Sigmoid colon (tissue), 7 donors: ENCODE measurements at regions of chr17 and their contacts with region 1.

Region 1: GRCh38 chr17:77424585-77425344 is 284.0 kb downstream of the SEC14L1 start:
- DNase-seq: peak; percentile 98
- H3K4me3 ChIP-seq: peak overlapping the region in 3 of 4 donors; percentile 21 to 41 (median 29)
- H3K27ac ChIP-seq: peak overlapping the region; percentile 96 to 100 (median 98)
- H3K4me1 ChIP-seq: peaks cover 0 to 99% (median 97%) of the 10 kb centered on the region in 4 donors
- H3K27me3 ChIP-seq: no peaks in the 10 kb centered on the region
- CTCF ChIP-seq: no peak
- EP300 ChIP-seq: peak in 2 of 4 donors; percentile 28 to 72
- POLR2A ChIP-seq: no peak

Region 2: DNA sequence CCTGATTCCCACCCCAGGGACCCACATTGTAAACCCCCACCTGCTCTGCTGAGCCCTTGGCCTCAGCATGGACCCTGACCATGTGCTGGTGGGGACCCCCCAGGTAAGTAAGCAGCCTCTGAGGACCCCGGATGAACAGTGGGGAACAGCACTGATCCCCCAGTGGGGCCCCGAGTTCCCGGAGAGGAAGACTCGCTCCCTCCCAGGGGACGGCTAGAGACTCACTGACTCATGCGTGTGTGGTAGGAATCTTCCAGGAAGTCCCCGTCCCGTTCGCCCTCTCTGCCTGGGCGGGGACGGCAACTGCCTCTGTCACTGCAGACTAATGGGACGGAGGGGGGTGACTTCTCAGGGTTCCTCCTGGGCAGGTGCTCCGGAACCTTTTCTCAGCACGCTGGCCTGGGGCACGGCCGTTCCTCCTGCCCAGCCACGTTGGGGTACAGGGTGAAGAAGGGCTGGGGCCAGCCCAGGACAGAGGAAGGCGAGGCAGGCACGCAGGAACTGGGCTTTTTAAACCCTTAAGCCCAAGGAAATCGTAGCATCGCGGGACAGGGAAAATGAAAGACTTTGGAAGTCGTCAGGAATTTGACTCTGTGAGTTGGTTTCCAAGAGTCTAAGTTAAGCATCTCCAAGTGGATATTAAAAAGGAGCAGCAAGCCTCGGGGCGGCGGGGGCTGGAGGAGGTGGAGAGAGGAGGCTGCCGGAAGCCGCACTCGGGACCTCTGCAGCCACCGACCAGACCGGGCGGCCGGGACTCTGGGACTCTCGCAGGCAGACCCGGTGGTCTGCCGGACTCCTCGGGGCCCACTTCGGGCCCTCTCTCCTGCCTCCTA is 105.3 kb before region 1 on chr17:
- intact Hi-C with region 1: loop called (anchors 1 kb)
- DNase-seq: peak; percentile 96
- H3K4me3 ChIP-seq: peak overlapping the region; percentile 30 to 51 (median 47)
- H3K27ac ChIP-seq: peak overlapping the region; percentile 91 to 92 (median 92)
- H3K4me1 ChIP-seq: peaks cover 0 to 85% (median 75%) of the 10 kb centered on the region in 4 donors
- H3K27me3 ChIP-seq: no peaks in the 10 kb centered on the region
- CTCF ChIP-seq: no peak
- EP300 ChIP-seq: peak in 2 of 4 donors; percentile 27 to 31
- POLR2A ChIP-seq: peak; percentile 65 to 77

Region 3: DNA sequence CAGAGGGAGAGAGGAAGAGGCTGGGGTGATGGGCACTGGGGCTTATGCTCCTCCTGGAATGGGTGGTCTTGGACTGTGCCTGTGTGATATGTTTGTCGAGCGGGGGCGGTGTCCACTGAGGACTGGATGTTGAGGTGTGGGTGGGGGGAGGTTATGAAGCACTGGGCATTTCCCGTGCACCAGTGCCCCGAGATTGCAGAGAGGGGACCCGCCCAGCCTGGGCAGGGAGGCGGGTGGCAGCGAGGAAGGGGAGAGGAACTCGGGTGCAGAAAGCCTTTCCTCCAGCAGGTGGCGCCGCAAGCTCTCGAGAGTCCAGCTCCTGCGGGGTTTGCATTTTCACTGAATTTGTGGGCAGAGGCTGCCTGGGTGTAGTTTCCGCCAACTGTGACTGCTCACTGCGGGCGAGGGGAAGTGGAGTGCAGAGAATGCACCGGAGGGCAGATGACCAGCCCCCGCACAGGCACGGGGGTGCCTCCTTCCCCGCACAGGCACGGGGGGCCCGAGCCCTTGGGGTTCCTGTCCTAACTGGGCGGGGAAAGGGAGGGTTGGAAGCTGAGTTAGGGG is 93.4 kb before region 1 on chr17:
- intact Hi-C with region 1: loop called (anchors 2 kb)
- DNase-seq: peak; percentile 96
- H3K4me3 ChIP-seq: peak overlapping the region in 3 of 4 donors; percentile 34 to 38 (median 35)
- H3K27ac ChIP-seq: peak overlapping the region; percentile 73 to 92 (median 80)
- H3K4me1 ChIP-seq: peaks cover 0 to 43% (median 28%) of the 10 kb centered on the region in 4 donors
- H3K27me3 ChIP-seq: no peaks in the 10 kb centered on the region
- CTCF ChIP-seq: peak; percentile 91 to 97 (median 94)
- EP300 ChIP-seq: no peak
- POLR2A ChIP-seq: no peak

Region 4: GRCh38 chr17:77372444-77373298 is 52.1 kb before region 1 on chr17:
- intact Hi-C with region 1: loop called (anchors 2 kb)
- DNase-seq: peak; percentile 95
- H3K4me3 ChIP-seq: peak overlapping the region; percentile 83 to 99 (median 89)
- H3K27ac ChIP-seq: peak overlapping the region; percentile 95 to 99 (median 99)
- H3K4me1 ChIP-seq: peaks cover 0 to 68% (median 58%) of the 10 kb centered on the region in 4 donors
- H3K27me3 ChIP-seq: no peaks in the 10 kb centered on the region
- CTCF ChIP-seq: no peak
- EP300 ChIP-seq: no peak
- POLR2A ChIP-seq: peak in 1 of 2 donors; percentile 17

Region 5: GRCh38 chr17:77396610-77397009 is 28.2 kb before region 1 on chr17:
- intact Hi-C with region 1: no loop called
- DNase-seq: no peak
- H3K4me3 ChIP-seq: no peak overlapping the region
- H3K27ac ChIP-seq: peak overlapping the region; percentile 96 to 100 (median 99)
- H3K4me1 ChIP-seq: peaks cover 0 to 96% (median 84%) of the 10 kb centered on the region in 4 donors
- H3K27me3 ChIP-seq: no peaks in the 10 kb centered on the region
- CTCF ChIP-seq: no peak
- EP300 ChIP-seq: no peak
- POLR2A ChIP-seq: no peak

Region 6: GRCh38 chr17:77409282-77410161 is 15.2 kb before region 1 on chr17:
- intact Hi-C with region 1: loop called (anchors 1 kb)
- DNase-seq: peak; percentile 97
- H3K4me3 ChIP-seq: peak overlapping the region; percentile 9 to 33 (median 27)
- H3K27ac ChIP-seq: peak overlapping the region; percentile 96 to 100 (median 98)
- H3K4me1 ChIP-seq: peaks cover 0 to 86% (median 80%) of the 10 kb centered on the region in 4 donors
- H3K27me3 ChIP-seq: no peaks in the 10 kb centered on the region
- CTCF ChIP-seq: no peak
- EP300 ChIP-seq: peak in 1 of 4 donors; percentile 89
- POLR2A ChIP-seq: peak; percentile 26 to 35

Region 7: GRCh38 chr17:77476931-77477877 is 52.4 kb after region 1 on chr17:
- intact Hi-C with region 1: no loop called
- DNase-seq: peak; percentile 97
- H3K4me3 ChIP-seq: peak overlapping the region in 1 of 4 donors; percentile 4
- H3K27ac ChIP-seq: peak overlapping the region; percentile 85 to 92 (median 91)
- H3K4me1 ChIP-seq: peaks cover 3 to 100% (median 100%) of the 10 kb centered on the region in 4 donors
- H3K27me3 ChIP-seq: no peaks in the 10 kb centered on the region
- CTCF ChIP-seq: peak in 1 of 4 experiments; percentile 42
- EP300 ChIP-seq: peak in 2 of 4 donors; percentile 64 to 71
- POLR2A ChIP-seq: peak in 1 of 2 donors; percentile 74

Region 8: GRCh38 chr17:77821097-77821496 is 396.3 kb after region 1 on chr17:
- intact Hi-C with region 1: no loop called
- DNase-seq: no peak
- H3K4me3 ChIP-seq: no peak overlapping the region
- H3K27ac ChIP-seq: no peak overlapping the region
- H3K4me1 ChIP-seq: no peaks in the 10 kb centered on the region
- H3K27me3 ChIP-seq: no peaks in the 10 kb centered on the region
- CTCF ChIP-seq: no peak
- EP300 ChIP-seq: no peak
- POLR2A ChIP-seq: no peak